ENCODE measurements at regions of chr2 and their contacts with region 1.

Region 1: DNA sequence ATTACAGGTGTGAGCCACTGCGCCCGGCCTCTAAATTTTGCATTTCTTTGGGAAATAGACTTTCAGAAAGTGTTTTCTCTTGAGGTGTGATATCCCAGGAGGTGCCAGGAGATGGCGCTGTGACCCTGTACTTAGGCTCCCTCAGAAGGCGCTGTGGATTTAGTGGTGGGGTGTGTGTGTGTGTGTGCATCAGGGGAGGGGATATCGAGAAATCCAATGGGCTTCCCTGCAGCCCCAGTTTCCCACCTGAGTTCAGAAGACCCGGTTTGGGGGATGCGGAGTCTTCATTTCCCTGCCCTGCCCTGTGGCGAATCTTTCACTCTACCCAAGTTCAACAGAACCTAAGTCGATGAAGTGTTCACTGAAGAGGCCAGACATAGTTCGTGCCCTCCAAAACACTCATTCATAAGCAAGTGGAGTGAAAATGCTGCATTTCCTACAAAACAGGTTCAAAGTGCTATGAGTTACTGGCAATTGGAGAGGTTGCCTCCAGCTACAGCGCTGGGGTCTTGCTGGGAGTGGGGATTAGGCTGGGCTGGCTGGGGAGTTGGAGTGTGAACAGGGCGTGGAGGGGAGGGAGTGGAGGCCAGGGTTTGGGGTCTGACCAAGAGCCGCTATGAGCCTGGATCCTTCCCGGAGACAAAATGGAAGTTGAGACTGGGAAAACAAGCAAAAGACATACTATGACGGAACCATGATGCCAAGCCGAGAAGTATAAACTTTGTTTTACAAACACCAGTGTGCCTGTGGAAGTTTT is 6.5 kb upstream of the WNT6 start:
- H3K4me3 ChIP-seq: no peak overlapping the region
- H3K27ac ChIP-seq: no peak overlapping the region
- H3K4me1 ChIP-seq: peaks cover 18% of the 10 kb centered on the region
- CTCF ChIP-seq: peak; percentile 92

Region 2: GRCh38 chr2:218659258-218659987 is 193.7 kb before region 1 on chr2 and contains the starts of genes BCS1L and ZNF142:
- CTCF ChIA-PET with region 1: interaction called, 44 read pairs
- POLR2A ChIA-PET with region 1: interaction called, 16 read pairs
- H3K4me3 ChIP-seq: peak within 1 kb of the TSS; percentile 85
- H3K27ac ChIP-seq: peak within 1 kb of the TSS; percentile 76
- H3K4me1 ChIP-seq: no peaks in the 10 kb centered on the region
- CTCF ChIP-seq: no peak

Region 3: GRCh38 chr2:218691234-218691633 is 161.9 kb before region 1 on chr2:
- CTCF ChIA-PET with region 1: interaction called, 42 read pairs
- POLR2A ChIA-PET with region 1: no interaction called
- H3K4me3 ChIP-seq: no peak overlapping the region
- H3K27ac ChIP-seq: no peak overlapping the region
- H3K4me1 ChIP-seq: no peaks in the 10 kb centered on the region
- CTCF ChIP-seq: no peak

Region 4: DNA sequence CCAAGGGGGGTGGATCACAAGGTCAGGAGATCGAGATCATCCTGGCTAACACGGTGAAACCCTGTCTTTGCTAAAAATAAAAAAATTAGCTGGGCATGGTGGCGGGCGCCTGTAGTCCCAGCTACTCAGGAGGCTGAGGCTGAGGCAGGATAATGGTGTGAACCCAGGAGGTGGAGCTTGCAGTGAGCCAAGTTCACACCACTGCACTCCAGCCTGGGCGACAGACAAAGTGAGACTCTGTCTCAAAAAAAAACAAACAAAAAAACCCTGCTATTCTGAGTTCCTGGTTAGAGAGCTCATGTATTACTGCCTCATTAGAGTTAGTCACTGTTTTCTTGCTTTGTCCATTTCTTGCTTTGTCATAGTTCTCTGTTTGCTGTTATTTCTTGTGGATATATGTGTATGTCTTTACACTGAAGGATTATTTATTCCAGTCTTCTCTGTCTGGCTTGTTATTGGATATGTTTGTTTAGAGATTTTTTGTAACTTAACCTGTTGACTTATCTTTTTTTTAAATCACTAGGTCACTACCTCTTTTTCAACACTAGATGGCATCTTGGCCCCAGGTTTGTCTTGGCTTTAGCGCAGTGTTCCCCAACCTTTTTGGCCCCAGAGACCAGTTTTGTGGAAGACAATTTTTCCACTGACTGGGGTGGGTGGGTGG is 125.5 kb before region 1 on chr2:
- CTCF ChIA-PET with region 1: interaction called, 27 read pairs
- POLR2A ChIA-PET with region 1: interaction called, 4 read pairs
- H3K4me3 ChIP-seq: no peak overlapping the region
- H3K27ac ChIP-seq: no peak overlapping the region
- H3K4me1 ChIP-seq: peaks cover 18% of the 10 kb centered on the region
- CTCF ChIP-seq: no peak

Region 5: DNA sequence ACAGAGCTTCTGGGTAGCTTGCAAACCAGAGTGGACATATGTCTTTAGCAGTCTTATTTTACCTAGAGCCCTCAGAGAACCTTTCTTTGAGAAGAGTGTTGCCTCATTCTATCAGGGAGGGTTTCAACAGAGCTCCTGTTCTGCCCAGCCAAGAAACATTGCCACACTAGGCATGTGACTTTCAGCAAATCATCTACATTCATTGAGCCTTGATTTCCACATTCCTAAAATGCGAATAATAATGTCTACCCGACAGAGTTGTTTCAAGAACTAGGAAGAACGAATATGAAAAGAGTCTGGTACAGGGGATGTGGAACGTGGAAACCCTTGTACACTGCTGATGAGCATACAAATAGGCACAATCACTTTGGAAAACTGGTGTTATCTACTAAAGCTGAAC is 13.7 kb before region 1 on chr2:
- CTCF ChIA-PET with region 1: interaction called, 22 read pairs
- POLR2A ChIA-PET with region 1: no interaction called
- H3K4me3 ChIP-seq: no peak overlapping the region
- H3K27ac ChIP-seq: no peak overlapping the region
- H3K4me1 ChIP-seq: peaks cover 6% of the 10 kb centered on the region
- CTCF ChIP-seq: no peak

Region 6: DNA sequence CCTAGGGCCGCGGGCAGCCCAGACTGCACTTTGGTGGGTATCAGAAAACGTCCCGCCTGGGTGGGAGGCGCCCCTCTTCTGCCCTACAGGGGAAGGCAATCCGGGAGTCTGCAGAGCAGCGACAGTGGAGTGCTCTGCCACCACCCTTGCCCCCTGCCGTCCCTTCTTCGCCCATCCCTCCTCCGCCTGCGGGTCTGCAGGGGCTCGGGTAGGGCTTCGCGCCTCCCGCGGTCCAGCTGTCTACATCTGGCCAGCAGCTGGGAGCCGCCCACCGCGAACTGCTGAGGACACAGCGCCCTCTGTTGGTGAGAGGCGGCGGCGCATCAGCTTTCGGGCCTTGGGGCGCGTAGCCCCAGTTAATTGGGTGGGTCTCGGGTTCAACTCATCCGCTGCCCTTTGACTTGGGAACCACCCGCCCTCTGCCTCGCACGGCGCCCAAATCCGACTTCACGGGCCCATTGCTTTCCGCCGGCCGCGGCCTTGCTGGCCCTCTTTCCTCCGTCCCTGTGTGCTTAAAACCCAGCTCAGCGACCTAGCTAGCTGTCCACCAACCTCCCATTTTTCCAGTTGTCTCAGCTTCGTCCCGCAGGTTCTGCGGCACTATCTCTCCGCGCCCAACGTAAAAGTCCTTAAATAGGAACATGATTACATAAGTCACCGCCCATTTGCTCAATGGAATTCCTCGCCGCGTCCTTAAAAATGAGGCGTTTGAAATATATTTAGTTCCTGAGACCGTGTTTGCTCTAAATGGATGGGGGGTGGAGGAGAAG is 45.2 kb after region 1 on chr2:
- CTCF ChIA-PET with region 1: interaction called, 115 read pairs
- POLR2A ChIA-PET with region 1: interaction called, 3 read pairs
- H3K4me3 ChIP-seq: peak overlapping the region; percentile 10
- H3K27ac ChIP-seq: no peak overlapping the region
- H3K4me1 ChIP-seq: no peaks in the 10 kb centered on the region; the same call in 1 of the 2 replicates
- CTCF ChIP-seq: peak; percentile 98